GM12878 (cell line): ENCODE measurements at regions of chr4 and their contacts with region 1.

Region 1: DNA sequence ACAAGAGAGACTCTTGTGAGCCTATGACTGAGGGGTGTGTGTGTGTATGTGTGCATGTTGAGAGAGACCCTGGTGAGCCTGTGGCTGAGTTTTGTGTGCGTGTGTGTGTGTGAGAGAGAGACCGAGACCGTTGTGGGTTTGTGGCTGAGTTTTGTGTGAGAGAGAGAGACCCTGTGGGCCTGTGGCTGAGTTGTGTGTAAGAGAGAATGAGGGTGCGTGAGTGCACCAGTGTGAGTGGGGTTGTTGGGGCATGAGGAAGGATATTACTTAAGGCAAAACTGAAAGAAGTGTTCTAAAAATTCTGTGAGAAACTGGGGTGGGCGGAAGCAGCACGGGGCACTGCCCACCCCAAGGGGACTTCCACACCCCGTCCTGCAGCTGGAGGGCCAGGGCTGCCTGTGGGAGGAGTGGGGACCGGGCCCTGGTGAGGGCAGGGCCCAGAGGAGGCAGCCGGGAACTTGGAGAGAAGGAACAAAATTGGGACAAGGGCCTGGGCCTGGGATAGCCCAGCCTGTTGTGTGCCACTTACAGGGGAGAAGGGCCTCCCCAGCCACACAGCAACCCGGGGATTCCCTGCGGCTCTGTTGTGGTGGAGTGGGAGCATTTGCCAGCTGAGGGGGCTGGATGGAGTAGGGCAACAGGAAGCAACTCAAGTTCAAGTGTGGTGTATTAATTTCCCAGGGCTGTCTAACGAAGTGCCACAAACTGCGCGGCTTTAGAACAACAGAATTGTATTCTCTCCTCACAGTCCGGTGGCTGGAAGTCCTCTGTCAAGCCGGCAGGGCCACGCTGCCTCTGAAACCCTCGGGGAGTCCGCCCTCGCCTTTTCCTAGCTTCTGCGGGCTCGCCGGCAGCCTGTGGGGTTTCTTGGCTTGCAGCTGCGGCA is 22.1 kb downstream of the TMEM131L start:
- DNase-seq: peak; percentile 94
- ATAC-seq: peak; percentile 63
- H3K4me3 ChIP-seq: peak overlapping the region; percentile 85
- H3K27ac ChIP-seq: peak overlapping the region; percentile 81
- H3K4me1 ChIP-seq: peaks cover 32% of the 10 kb centered on the region
- H3K27me3 ChIP-seq: no peaks in the 10 kb centered on the region
- CTCF ChIP-seq: no peak
- EP300 ChIP-seq: peak; percentile 32 to 66; a peak in 2 of 4 replicates
- POLR2A ChIP-seq: peak; percentile 70
- RAD21 ChIP-seq: no peak

Region 2: DNA sequence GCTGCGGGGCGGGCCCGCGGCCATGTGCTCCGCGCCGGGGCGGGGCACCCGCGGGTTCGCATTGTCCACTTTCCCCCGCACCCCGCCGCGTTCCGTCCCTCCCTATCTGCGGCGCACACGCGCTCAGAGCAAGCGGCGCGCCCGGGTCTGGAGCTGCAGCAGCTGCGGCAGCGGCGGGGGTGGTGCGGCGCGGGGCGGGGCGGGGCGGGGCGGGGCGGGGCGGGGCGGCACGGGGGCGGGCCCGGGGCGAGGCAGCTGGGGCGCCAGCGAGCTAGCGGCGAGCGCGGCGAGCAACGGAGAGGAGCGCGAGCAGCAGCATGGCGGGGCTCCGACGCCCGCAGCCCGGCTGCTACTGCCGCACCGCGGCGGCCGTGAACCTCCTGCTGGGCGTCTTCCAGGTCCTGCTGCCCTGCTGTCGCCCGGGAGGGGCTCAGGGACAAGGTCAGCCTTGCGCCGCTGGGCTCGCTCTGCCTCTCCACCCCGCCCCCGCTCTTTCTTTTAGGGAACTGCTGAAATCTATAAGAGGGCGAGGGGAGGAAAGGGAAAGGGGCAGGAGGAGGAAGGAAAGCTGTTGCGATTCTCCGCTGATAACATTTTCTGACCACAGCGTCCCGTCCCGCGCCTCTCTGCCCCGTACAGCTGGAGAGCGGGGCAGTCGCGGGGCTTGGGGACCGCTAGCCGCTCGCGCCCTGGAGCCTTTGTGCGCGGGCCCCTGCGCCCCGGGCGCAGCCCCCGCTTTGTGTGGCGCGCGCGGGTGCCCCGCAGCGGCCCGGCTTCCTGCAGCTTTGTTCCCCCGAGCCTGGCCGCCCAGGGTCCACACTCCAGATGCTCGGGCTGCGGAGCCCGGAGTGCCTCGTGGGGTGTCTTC is 21.9 kb before region 1 on chr4 and contains the start of gene TMEM131L:
- CTCF ChIA-PET with region 1: interaction called, 54 read pairs
- POLR2A ChIA-PET with region 1: interaction called, 268 read pairs
- RAD21 ChIA-PET with region 1: interaction called, 429 read pairs
- SMC1A ChIA-PET with region 1: interaction called, 356 read pairs
- in situ Hi-C with region 1: no loop called
- intact Hi-C with region 1: loop called (anchors 1 kb)
- DNase-seq: no peak
- ATAC-seq: peak; percentile 62
- H3K4me3 ChIP-seq: peak within 1 kb of the TSS; percentile 98
- H3K27ac ChIP-seq: peak within 1 kb of the TSS; percentile 88
- H3K4me1 ChIP-seq: peaks cover 18% of the 10 kb centered on the region
- H3K27me3 ChIP-seq: no peaks in the 10 kb centered on the region
- CTCF ChIP-seq: peak in 2 of 3 experiments; percentile 35 to 40; a peak in 3 of 6 replicates
- EP300 ChIP-seq: no peak; a peak in 1 of 4 replicates
- POLR2A ChIP-seq: peak; percentile 93
- RAD21 ChIP-seq: no peak; the same call in 1 of the 2 replicates
- polyA plus RNA-seq, gene TMEM131L: 8.5 to 9.5 TPM

Region 3: DNA sequence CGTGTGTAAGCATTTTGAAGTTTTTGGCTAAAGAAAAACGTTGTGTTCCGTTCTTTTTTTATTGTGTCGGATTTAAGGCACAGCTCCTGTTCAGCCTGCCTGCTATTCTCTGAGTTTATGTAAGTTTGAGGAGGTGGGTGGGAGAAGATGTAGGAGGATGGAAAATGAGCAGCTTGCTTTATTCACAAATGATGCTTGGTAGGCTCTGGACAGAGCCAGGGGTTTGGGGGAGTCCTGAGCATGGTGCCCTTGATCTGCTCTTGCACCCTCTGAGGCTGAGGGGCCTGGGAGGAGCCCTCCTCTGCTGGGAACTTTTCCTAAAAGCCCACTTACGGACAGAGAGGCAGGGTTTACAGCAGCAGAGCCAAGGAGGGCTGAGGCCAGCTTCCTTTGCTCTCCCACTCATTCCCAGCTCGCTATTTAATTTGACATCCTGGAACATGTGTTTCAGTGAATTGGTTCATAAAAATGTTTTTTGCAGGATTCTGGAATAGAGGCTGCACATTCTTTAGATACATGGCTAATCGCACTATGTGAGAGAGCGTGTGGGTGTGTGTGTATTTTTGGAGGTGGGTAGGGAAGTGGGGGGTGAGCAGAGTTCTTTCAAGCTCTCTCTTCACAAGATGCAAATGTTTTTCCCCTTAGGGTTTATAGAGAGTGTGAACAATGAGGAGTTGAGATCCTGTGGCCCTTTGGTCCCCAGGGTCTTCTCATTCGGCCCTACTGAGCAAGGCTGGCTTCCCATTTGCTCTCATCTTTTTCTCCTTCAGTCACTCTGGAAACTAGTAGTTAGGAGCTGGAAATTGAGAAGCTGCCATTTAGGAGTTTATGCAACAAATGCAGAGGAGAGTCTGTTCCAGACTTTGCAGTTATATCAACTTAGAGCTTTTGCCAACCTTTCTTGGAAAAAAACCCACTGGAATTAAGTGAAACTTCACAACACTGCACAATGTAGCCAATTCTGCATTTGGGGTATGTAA is 10.0 kb after region 1 on chr4:
- CTCF ChIA-PET with region 1: interaction called, 17 read pairs
- POLR2A ChIA-PET with region 1: interaction called, 64 read pairs
- RAD21 ChIA-PET with region 1: interaction called, 55 read pairs
- SMC1A ChIA-PET with region 1: interaction called, 121 read pairs
- in situ Hi-C with region 1: no loop called
- intact Hi-C with region 1: no loop called
- DNase-seq: peak; percentile 72
- ATAC-seq: peak; percentile 69
- H3K4me3 ChIP-seq: peak overlapping the region; percentile 51
- H3K27ac ChIP-seq: peak overlapping the region; percentile 58
- H3K4me1 ChIP-seq: peaks cover 53% of the 10 kb centered on the region
- H3K27me3 ChIP-seq: no peaks in the 10 kb centered on the region
- CTCF ChIP-seq: no peak
- EP300 ChIP-seq: peak; percentile 23 to 38; a peak in 1 of 4 replicates
- POLR2A ChIP-seq: no peak
- RAD21 ChIP-seq: no peak

Region 4: GRCh38 chr4:153521999-153522801 is 34.0 kb after region 1 on chr4:
- CTCF ChIA-PET with region 1: interaction called, 11 read pairs
- POLR2A ChIA-PET with region 1: interaction called, 322 read pairs
- RAD21 ChIA-PET with region 1: interaction called, 197 read pairs
- SMC1A ChIA-PET with region 1: interaction called, 85 read pairs
- in situ Hi-C with region 1: no loop called
- intact Hi-C with region 1: loop called (anchors 1 kb)
- DNase-seq: peak; percentile 71
- ATAC-seq: peak; percentile 54
- H3K4me3 ChIP-seq: peak overlapping the region; percentile 59
- H3K27ac ChIP-seq: peak overlapping the region; percentile 96
- H3K4me1 ChIP-seq: peaks cover 85% of the 10 kb centered on the region
- H3K27me3 ChIP-seq: no peaks in the 10 kb centered on the region
- CTCF ChIP-seq: no peak
- EP300 ChIP-seq: no peak; a peak in 1 of 4 replicates
- POLR2A ChIP-seq: peak; percentile 56; the same call in 1 of the 2 replicates
- RAD21 ChIP-seq: no peak

Region 5: GRCh38 chr4:153541456-153542096 is 53.3 kb after region 1 on chr4:
- CTCF ChIA-PET with region 1: interaction called, 9 read pairs
- POLR2A ChIA-PET with region 1: interaction called, 322 read pairs
- RAD21 ChIA-PET with region 1: interaction called, 8 read pairs
- SMC1A ChIA-PET with region 1: interaction called, 10 read pairs
- in situ Hi-C with region 1: no loop called
- intact Hi-C with region 1: no loop called
- DNase-seq: no peak
- ATAC-seq: peak; percentile 64
- H3K4me3 ChIP-seq: no peak overlapping the region
- H3K27ac ChIP-seq: no peak overlapping the region
- H3K4me1 ChIP-seq: peaks cover 21% of the 10 kb centered on the region
- H3K27me3 ChIP-seq: no peaks in the 10 kb centered on the region
- CTCF ChIP-seq: no peak
- EP300 ChIP-seq: no peak
- POLR2A ChIP-seq: no peak
- RAD21 ChIP-seq: no peak

Region 6: DNA sequence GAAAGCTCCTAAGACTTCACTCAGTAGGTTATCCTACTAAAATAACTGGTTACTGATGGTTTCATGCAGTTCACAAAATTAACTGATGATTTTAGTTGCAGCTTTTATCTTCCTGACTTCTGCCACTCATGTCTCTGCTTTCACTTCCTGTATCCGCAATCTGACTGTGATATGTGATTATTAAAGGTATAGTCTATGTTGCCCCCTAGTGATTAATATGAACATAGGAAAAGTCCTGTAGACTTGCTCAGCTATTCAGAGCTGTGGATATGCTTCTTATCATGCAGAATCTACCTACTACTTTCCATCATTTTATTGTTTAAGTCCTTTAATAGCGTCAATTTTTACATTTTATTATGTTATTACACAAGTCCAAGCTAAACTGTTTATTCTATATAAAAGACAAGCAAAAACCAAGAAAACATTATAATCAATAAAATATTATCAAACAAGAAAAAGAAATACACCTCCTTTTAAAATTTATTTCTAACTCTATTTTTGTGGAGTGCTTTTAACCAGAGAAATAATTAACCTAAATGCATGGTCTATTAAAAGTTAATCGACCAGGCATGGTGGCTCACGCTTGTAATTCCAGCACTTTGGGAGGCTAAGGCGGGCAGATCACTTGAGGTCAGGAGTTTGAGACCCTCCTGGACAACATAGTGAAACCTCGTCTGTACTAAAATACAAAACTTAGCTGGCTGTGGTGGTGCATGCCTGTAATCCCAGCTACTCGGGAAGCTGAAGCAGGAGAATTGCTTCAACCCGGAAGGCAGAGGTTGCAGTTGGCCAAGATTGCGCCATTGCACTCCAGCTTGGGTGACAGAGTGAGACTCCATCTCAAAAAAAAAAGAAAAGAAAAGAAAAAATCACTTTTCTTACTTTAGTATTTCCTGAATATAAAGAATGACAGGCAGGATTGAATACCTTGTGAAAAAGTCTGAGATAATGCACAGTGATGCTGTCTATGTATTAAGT is 155.4 kb after region 1 on chr4:
- CTCF ChIA-PET with region 1: interaction called, 3 read pairs
- POLR2A ChIA-PET with region 1: no interaction called
- RAD21 ChIA-PET with region 1: interaction called, 4 read pairs
- SMC1A ChIA-PET with region 1: no interaction called
- in situ Hi-C with region 1: no loop called
- intact Hi-C with region 1: loop called (anchors 5 kb)
- DNase-seq: peak; percentile 50
- ATAC-seq: peak; percentile 88
- H3K4me3 ChIP-seq: no peak overlapping the region
- H3K27ac ChIP-seq: no peak overlapping the region
- H3K4me1 ChIP-seq: peaks cover 6% of the 10 kb centered on the region; the same call in 1 of the 2 replicates
- H3K27me3 ChIP-seq: no peaks in the 10 kb centered on the region
- CTCF ChIP-seq: peak; percentile 50 to 65 (median 54); a peak in 5 of 6 replicates
- EP300 ChIP-seq: no peak
- POLR2A ChIP-seq: no peak
- RAD21 ChIP-seq: peak; percentile 78

Region 7: GRCh38 chr4:153822316-153822715 is 334.1 kb after region 1 on chr4:
- CTCF ChIA-PET with region 1: no interaction called
- POLR2A ChIA-PET with region 1: no interaction called
- RAD21 ChIA-PET with region 1: no interaction called
- SMC1A ChIA-PET with region 1: no interaction called
- in situ Hi-C with region 1: no loop called
- intact Hi-C with region 1: no loop called
- DNase-seq: no peak
- ATAC-seq: no peak
- H3K4me3 ChIP-seq: no peak overlapping the region
- H3K27ac ChIP-seq: no peak overlapping the region
- H3K4me1 ChIP-seq: no peaks in the 10 kb centered on the region
- H3K27me3 ChIP-seq: no peaks in the 10 kb centered on the region
- CTCF ChIP-seq: no peak
- EP300 ChIP-seq: no peak
- POLR2A ChIP-seq: no peak
- RAD21 ChIP-seq: no peak